Posterior vena cava (tissue), 2 donors: ENCODE measurements at regions of chr3 and their contacts with region 1.

Region 1: GRCh38 chr3:160754855-160755747 is 930 bp upstream of the PPM1L start:
- DNase-seq: peak; percentile 97

Region 2: DNA sequence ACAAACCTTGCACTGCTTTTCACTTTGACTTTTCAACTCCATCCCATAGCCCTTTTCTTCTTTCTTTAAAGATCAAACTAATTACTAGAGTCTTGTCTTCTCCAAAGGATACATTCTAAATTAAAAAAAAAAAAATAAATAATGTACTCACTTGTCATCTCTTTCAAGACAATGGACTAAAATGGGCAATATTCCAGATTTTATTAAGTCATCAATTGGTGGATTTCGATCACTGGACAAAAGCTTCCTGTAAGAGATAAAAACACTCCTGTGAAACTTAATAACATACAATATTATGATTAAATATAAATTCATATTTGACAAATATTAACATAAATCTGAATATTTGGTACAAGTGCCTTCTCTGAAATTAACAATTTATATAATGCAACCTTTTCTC is 223.8 kb before region 1 on chr3:
- intact Hi-C with region 1: no loop called
- DNase-seq: no peak

Region 3: GRCh38 chr3:160801386-160802118 is 46.5 kb after region 1 on chr3:
- intact Hi-C with region 1: loop called in 1 of 2 experiments (anchors 10 kb)
- DNase-seq: no peak